H1 (cell line): ENCODE measurements at regions of chr6 and their contacts with region 1.

Region 1: GRCh38 chr6:31114970-31115849 is 610 bp downstream of the PSORS1C1 start:
- DNase-seq: no peak
- H3K4me3 ChIP-seq: no peak overlapping the region
- H3K27ac ChIP-seq: no peak overlapping the region
- H3K4me1 ChIP-seq: peaks cover 0 to 19% (median 9%) of the 10 kb centered on the region in 4 experiments; a peak in 6 of 7 replicates
- H3K27me3 ChIP-seq: peaks cover 0 to 9% (median under 1%) of the 10 kb centered on the region in 4 experiments; a peak in 2 of 7 replicates
- CTCF ChIP-seq: peak in 2 of 3 experiments; percentile 12 to 35; a peak in 1 of 4 replicates
- EP300 ChIP-seq: no peak
- POLR2A ChIP-seq: no peak
- RAD21 ChIP-seq: peak in 1 of 2 experiments; percentile 27; a peak in 3 of 4 replicates

Region 2: GRCh38 chr6:31087494-31088089 is 27.6 kb before region 1 on chr6:
- CTCF ChIA-PET with region 1: interaction called, 11 read pairs
- POLR2A ChIA-PET with region 1: interaction called, 3 read pairs
- DNase-seq: peak in 1 of 2 experiments; percentile 87
- H3K4me3 ChIP-seq: no peak overlapping the region
- H3K27ac ChIP-seq: no peak overlapping the region
- H3K4me1 ChIP-seq: no peaks in the 10 kb centered on the region; a peak in 1 of 7 replicates
- H3K27me3 ChIP-seq: no peaks in the 10 kb centered on the region
- CTCF ChIP-seq: peak; percentile 47 to 70 (median 67)
- EP300 ChIP-seq: no peak
- POLR2A ChIP-seq: no peak
- RAD21 ChIP-seq: peak; percentile 81 to 83

Region 3: DNA sequence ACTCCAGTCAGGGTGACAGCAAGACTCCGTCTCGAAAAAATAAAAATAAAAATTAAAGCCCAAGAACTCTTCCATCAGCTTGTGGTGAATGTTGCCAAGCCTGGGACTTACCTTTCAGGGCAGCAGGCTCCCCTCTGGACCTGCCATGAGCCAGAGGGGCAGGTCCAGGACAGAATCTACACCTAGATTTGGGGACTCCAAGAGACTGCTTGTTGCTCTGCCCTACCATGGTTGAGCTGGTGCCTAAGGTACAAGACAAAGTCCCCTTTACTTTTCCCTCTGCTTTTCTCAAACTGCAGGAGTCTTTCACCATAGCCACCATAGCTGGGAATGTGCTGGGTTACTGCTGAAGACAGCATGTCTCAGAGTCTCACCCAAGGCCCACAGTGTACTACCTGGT is 12.1 kb before region 1 on chr6:
- CTCF ChIA-PET with region 1: interaction called, 11 read pairs
- POLR2A ChIA-PET with region 1: no interaction called
- DNase-seq: no peak
- H3K4me3 ChIP-seq: no peak overlapping the region
- H3K27ac ChIP-seq: no peak overlapping the region
- H3K4me1 ChIP-seq: no peaks in the 10 kb centered on the region
- H3K27me3 ChIP-seq: no peaks in the 10 kb centered on the region
- CTCF ChIP-seq: no peak
- EP300 ChIP-seq: no peak
- POLR2A ChIP-seq: no peak
- RAD21 ChIP-seq: no peak